ENCODE measurements at regions of chr1 and their contacts with region 1.

Region 1: DNA sequence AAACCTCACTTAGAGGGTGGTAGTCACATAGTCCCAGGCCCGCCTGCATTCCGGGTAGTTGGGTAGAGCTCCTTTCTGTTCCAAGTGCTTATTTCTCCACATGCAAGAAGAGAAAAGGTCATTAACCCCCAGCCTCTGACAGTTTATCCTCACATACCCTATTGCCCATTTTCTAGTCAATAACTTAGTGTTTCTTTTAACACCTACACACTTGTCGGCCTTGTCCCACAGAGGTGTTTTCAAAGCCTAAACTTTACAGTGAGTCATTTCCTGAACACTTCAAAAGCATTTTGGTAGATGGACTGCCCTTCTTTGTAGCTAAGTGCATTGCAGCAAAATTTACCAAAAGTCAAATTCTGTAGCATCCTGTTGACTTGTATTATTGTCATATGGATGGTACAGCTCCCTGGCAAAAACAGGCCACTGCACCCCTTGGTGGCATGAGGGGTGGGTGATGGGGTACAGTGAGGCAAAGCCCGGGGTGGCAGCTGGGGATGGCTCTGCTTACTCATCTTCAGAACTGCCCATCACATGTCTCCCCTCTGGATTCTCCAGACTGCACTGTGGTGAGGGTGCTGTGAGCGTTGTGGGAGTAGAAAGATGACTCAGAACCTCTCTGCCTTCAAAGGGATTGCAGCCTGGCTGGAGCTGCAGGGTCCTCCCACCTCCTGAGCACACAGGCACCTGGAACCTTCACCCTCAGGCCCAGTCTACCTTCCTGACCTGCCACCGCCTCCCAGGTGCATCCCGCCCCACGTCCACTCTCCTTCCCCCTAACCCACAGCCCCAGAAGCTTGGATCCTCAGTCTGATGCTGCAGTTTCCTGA is 45.8 kb upstream of the DMRTB1 start:
- DNase-seq: peak; percentile 68
- H3K4me3 Mint-ChIP-seq: peak overlapping the region; percentile 24
- H3K27ac Mint-ChIP-seq: peak overlapping the region; percentile 99
- H3K4me1 Mint-ChIP-seq: peaks cover 52% of the 10 kb centered on the region
- H3K27me3 Mint-ChIP-seq: peaks cover 5% of the 10 kb centered on the region

Region 2: GRCh38 chr1:53361541-53361961 is 51.8 kb before region 1 on chr1:
- CTCF ChIA-PET with region 1: no interaction called
- POLR2A ChIA-PET with region 1: no interaction called
- DNase-seq: no peak
- H3K4me3 Mint-ChIP-seq: no peak overlapping the region
- H3K27ac Mint-ChIP-seq: no peak overlapping the region
- H3K4me1 Mint-ChIP-seq: peaks cover 10% of the 10 kb centered on the region
- H3K27me3 Mint-ChIP-seq: peaks cover 20% of the 10 kb centered on the region

Region 3: DNA sequence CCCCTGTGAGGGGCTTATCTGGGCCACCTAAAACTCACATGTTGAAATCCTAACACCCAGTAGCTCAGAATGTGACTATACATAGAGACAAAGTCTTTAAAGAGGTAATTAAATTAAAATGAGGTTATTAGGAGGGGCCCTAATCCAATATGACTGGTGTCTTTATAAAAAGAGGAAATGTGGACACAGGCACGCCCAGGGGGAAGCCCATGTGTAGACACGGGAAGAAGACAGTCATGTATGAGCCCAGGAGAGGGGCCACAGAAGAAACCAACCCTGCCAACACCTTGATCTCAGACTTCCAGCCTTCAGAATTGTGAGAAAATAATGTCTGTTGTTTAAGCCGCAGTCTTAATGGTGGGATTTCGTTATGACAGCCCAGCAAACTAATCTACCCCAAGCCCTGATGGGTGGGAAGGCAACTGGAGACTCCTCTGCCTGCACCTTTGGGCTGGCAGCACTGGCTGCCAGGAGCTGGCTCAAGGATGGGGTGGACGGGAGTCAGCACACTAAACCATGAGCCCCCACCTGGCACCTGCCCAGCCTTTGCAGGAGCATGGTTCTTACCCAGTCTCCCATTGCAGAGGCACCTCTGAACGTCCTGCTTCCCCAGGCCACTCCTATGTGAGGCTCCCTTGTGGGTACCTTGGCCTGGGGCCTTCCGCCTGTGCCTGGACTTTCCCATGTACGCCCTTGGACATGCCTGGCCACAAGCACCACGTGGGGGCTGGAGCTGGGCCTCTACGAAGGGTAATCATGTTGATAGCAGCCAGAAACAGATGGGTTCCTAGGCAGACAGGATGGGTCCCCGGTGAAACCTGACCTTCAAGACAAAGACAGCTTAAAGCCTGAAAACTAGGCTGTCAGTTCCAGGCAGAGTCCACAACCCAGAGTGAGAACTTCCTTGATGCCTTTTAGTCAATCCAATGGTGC is 11.3 kb before region 1 on chr1:
- CTCF ChIA-PET with region 1: interaction called, 14 read pairs
- POLR2A ChIA-PET with region 1: no interaction called
- DNase-seq: no peak
- H3K4me3 Mint-ChIP-seq: no peak overlapping the region
- H3K27ac Mint-ChIP-seq: no peak overlapping the region
- H3K4me1 Mint-ChIP-seq: no peaks in the 10 kb centered on the region
- H3K27me3 Mint-ChIP-seq: peaks cover 8% of the 10 kb centered on the region

Measured in activated CD4-positive, alpha-beta T cell treated with anti-CD3 and anti-CD28 coated beads, Interleukin-2, amount 10 ng/mL, durations not matched to agents 7 days and 5 days (primary cell).